ENCODE measurements at regions of chr1 and their contacts with region 1.

Region 1: DNA sequence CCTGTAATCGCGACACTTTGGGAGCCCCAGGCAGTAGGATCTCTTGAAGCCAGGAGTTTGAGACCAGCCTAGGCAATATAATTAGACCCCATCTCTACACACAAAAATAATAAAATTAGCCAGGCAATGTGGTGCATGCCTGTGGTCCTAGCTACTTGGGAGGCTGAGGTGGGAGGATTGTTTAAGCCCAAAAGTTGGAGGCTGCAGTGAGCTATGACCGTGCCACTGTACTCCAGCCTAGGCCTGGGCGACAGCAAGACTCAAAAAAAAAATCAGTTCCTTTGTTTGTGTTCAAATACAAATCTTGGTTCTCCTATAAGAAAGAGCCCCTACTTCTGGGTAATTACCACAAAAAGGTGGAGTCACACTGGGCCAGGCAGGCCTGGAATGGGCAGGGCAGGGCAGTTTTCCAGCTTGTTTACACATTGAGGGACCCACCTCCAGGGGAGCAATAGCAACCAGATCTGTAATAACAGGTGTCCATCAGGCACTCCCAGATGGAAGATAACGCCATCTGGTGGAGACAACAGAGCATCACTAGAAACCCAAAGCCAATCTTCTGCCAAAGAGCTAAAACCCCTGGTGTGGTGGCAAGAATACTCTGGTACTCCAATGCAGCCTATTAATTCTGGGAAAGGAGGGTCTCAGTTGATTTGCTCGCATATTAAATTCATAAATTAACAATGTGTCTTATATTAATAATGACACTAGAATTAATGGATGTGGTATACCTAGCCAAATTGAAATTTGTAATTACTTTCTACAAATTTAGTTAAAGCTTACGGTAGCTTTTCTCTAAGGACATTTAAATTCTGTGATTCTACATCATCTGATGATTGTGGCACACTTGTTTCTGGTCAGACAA is 13.2 kb downstream of the PPP1R15B start:
- DNase-seq: peak; percentile 82
- CTCF ChIP-seq: peak; percentile 67

Region 2: GRCh38 chr1:204147392-204148097 is 250.9 kb before region 1 on chr1:
- CTCF ChIA-PET with region 1: no interaction called
- POLR2A ChIA-PET with region 1: no interaction called
- DNase-seq: no peak
- CTCF ChIP-seq: no peak

Region 3: GRCh38 chr1:204171751-204172178 is 226.7 kb before region 1 on chr1:
- CTCF ChIA-PET with region 1: interaction called, 39 read pairs
- POLR2A ChIA-PET with region 1: no interaction called
- DNase-seq: no peak
- CTCF ChIP-seq: no peak

Region 4: DNA sequence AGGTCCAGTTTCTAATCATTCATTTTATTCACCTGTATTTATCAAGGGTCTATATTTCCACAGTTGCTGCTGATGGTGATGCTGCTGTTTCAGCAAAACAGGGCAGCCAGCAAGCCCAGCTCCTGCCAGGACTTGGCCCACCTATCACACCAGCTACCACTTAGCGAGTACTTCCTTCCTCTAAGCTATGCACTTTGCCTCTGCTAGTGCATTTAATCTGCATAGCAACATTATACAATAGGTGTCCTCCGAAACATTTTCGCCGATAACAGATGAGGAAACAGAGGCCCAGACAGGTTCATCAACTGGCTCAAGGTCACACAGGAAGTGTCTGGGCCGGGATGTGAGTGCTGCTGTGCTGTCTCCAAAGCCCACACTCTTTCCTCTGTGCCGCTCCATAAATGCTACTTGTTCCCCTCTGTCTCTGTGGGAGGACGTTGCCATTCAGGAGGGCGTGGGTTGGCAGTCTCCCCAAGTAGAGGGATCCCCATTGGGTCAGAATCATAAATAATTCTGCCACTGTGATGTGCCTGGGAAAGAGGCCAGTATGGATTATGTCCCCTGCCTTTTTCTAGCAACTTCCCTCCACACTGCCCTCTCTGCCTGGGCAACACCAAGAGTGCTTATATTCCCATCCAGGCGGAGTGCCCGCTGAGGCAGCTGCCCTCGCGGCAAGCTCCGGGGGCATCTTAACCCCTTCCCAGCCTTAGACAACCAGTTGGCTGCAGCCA is 29.3 kb before region 1 on chr1:
- CTCF ChIA-PET with region 1: interaction called, 17 read pairs
- POLR2A ChIA-PET with region 1: interaction called, 3 read pairs
- DNase-seq: no peak
- CTCF ChIP-seq: no peak

Region 5: DNA sequence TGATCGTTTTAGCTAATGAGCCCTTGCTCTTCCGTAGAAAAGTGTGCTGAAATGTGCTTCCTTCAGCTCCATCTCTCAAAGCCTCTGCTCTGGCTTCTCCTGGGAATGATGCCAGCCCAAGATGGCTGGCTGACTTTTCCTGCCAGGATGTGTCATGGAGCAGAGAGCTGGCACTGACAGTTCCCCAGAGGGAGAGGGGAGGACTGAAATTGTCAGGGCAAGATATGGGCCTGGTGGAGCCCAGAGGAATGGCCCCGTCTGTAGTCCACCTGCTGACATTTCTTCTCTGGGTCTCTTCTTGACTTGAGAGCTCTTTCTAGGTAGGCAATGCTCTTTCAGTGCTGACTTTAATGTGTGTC is 13.5 kb before region 1 on chr1:
- CTCF ChIA-PET with region 1: interaction called, 60 read pairs
- POLR2A ChIA-PET with region 1: interaction called, 4 read pairs
- DNase-seq: no peak
- CTCF ChIP-seq: no peak

Region 6: GRCh38 chr1:204417231-204417997 is 19.0 kb after region 1 on chr1:
- CTCF ChIA-PET with region 1: interaction called, 15 read pairs
- POLR2A ChIA-PET with region 1: no interaction called
- DNase-seq: no peak
- CTCF ChIP-seq: no peak

Region 7: GRCh38 chr1:204465546-204466415 is 67.3 kb after region 1 on chr1:
- CTCF ChIA-PET with region 1: interaction called, 13 read pairs
- POLR2A ChIA-PET with region 1: interaction called, 3 read pairs
- DNase-seq: peak; percentile 80
- CTCF ChIP-seq: no peak

Region 8: GRCh38 chr1:204746838-204747442 is 348.5 kb after region 1 on chr1:
- CTCF ChIA-PET with region 1: no interaction called
- POLR2A ChIA-PET with region 1: no interaction called
- DNase-seq: peak; percentile 52
- CTCF ChIP-seq: peak; percentile 86